ENCODE measurements at regions of chr4 and their contacts with region 1.

Region 1: DNA sequence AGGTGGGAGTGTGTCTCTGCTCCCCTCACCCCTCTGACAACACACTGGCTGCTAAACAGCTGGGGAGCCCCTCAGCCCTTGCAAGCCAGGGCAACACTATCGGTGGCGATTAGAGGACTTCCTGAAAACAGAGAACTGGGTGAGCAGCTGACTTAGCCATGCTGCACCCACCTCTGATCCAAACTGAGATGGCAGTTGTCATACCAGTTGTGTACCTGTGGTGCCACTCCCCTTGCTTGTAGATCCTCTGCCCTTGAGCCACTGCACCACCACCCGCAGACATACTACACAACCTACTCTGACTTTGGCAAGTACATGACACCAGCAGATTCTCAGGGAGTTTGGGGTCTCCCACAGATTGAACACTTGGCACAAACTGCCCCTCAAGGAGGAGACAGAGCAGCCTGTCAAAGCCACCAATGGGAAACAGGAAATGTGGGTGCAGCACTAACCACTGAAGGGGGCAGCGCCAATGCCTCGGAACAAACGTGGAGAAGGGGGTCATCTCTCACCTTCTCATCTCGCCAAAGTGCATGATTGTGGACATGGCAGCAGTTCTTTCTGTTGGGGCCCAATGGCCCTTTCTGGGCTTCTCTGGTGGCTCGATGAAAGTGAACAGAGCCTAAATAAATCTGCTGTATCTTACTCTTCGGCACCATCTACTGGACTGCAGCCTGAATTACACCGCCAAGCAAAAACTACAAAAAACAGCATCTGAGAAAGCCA is 119.8 kb downstream of the NEK1 start:
- DNase-seq: peak in 4 of 7 donors; percentile 8 to 29 (median 12)
- H3K4me3 ChIP-seq: no peak overlapping the region
- H3K27ac ChIP-seq: no peak overlapping the region
- H3K4me1 ChIP-seq: no peaks in the 10 kb centered on the region
- H3K27me3 ChIP-seq: no peaks in the 10 kb centered on the region
- CTCF ChIP-seq: peak; percentile 28 to 61 (median 56)
- POLR2A ChIP-seq: no peak

Region 2: DNA sequence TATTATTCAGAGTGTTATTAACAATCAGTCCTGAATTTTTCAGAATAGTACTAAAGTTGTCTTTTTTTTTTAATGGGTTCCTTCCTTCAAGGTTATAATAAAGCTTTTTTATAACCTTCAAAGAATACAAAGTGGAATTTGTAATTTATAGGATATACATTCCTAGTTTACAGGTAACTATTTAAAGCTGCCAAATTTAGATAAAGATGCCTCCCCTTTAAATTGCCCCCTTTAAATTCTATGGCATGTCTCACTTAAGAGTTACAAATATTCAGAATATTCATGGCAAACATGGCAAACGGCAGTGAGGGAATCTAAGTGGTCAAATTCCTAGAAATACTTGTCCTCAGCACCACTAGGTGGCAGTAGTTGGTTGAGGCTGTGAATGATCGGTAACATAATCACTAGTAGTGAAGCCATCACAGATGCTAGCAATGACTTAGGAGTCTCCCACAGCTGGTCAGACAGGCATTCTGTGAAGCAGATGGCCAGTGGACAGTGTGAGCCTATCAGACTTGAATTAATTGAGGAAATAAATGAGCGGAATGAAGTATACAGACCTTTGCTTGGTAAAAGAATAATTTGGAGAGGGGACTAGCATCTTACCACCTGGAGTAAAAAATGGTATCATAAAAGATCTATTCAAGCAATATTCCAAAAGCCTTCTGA is 568.9 kb before region 1 on chr4:
- intact Hi-C with region 1: loop called (anchors 5 to 10 kb)
- DNase-seq: peak; percentile 51 to 77 (median 68)
- H3K4me3 ChIP-seq: no peak overlapping the region
- H3K27ac ChIP-seq: no peak overlapping the region
- H3K4me1 ChIP-seq: no peaks in the 10 kb centered on the region
- H3K27me3 ChIP-seq: no peaks in the 10 kb centered on the region
- CTCF ChIP-seq: peak; percentile 61 to 82 (median 78)
- POLR2A ChIP-seq: no peak

Region 3: GRCh38 chr4:169727616-169728015 is 235.0 kb after region 1 on chr4:
- intact Hi-C with region 1: no loop called
- DNase-seq: no peak
- H3K4me3 ChIP-seq: no peak overlapping the region
- H3K27ac ChIP-seq: no peak overlapping the region
- H3K4me1 ChIP-seq: no peaks in the 10 kb centered on the region
- H3K27me3 ChIP-seq: no peaks in the 10 kb centered on the region
- CTCF ChIP-seq: no peak
- POLR2A ChIP-seq: no peak

Region 4: DNA sequence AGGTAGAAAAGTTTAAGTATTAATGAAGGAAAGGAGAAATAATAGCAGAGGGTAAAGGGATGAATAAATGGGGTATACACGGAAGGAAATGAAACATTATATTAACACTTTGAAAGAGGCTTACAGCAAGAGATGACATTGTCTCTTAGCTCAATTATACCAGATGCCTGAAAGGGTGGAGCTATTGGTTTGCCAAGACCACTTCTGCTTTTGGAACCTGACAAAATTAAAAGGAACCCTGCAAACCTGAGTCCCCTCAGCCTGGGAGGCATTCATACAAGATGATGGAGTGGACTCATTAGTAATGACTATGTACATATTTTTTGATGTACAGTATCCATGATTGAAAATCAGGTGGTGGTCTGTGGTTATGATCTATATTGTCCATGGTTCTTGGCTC is 310.3 kb after region 1 on chr4:
- intact Hi-C with region 1: no loop called
- DNase-seq: no peak
- H3K4me3 ChIP-seq: no peak overlapping the region
- H3K27ac ChIP-seq: no peak overlapping the region
- H3K4me1 ChIP-seq: no peaks in the 10 kb centered on the region
- H3K27me3 ChIP-seq: no peaks in the 10 kb centered on the region
- CTCF ChIP-seq: no peak
- POLR2A ChIP-seq: no peak

Measured in adrenal gland (tissue), 19 donors.